Activated CD8-positive, alpha-beta T cell treated with anti-CD3 and anti-CD28 coated beads, Interleukin-2, amount 10 ng/mL, durations not matched to agents 7 days and 5 days (primary cell): ENCODE measurements at regions of chr11 and their contacts with region 1.

Region 1: DNA sequence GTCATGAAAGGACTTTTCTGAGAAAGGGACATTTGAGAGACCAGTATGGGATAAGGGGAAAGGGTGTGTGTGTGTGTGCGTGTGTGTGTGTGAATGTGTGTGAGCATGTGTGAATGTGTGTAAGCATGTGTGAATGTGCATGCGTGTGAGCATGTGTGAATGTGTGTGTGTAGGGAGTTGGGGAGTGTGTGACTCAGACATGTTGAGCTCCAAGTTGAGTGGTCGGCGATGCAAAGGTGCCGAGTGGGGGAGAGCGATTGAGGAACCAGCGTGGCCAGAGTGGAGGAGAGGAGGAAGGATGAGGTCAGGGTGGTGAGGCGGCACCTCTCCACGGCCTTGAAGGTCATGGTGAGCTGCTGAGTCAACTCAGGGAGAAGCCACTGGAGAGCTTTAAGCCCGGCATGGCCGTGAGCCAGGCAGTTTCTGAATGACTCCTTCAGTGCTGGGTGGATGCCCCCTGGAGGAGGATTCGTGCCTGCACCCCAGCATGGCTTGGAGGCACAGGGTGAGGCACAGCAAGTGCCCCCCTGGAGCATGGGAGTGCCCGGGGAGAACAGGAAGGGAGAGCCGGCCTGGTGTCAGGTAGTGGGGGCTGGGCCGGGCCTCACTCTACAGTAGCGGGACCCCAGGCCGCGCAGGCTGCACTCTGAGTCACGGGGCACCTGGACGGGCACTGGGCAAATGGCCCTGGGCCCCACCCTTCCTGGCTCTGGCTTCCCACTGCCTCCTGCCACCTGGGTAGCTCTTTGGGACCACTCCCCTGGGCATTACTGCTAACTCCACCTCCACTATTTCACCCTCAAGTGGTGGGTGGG is 8.2 kb upstream of the CCDC88B start:
- DNase-seq: peak; percentile 89
- ATAC-seq: peak; percentile 95
- H3K4me3 Mint-ChIP-seq: peak overlapping the region; percentile 1
- H3K27ac Mint-ChIP-seq: peak overlapping the region; percentile 86
- H3K4me1 Mint-ChIP-seq: peaks cover 38% of the 10 kb centered on the region
- H3K27me3 Mint-ChIP-seq: peaks cover 2% of the 10 kb centered on the region

Region 2: GRCh38 chr11:64341851-64342791 is 10.4 kb after region 1 on chr11:
- CTCF ChIA-PET with region 1: interaction called, 27 read pairs
- POLR2A ChIA-PET with region 1: interaction called, 22 read pairs
- DNase-seq: peak; percentile 95
- ATAC-seq: peak; percentile 84
- H3K4me3 Mint-ChIP-seq: peak overlapping the region; percentile 80
- H3K27ac Mint-ChIP-seq: no peak overlapping the region
- H3K4me1 Mint-ChIP-seq: peaks cover 55% of the 10 kb centered on the region
- H3K27me3 Mint-ChIP-seq: no peaks in the 10 kb centered on the region

Region 3: GRCh38 chr11:64358907-64359711 is 27.3 kb after region 1 on chr11 and contains the start of gene RPS6KA4:
- CTCF ChIA-PET with region 1: interaction called, 39 read pairs
- POLR2A ChIA-PET with region 1: no interaction called
- DNase-seq: peak; percentile 51
- ATAC-seq: peak; percentile 87
- H3K4me3 Mint-ChIP-seq: peak within 1 kb of the TSS; percentile 82
- H3K27ac Mint-ChIP-seq: peak within 1 kb of the TSS; percentile 79
- H3K4me1 Mint-ChIP-seq: peaks cover 51% of the 10 kb centered on the region
- H3K27me3 Mint-ChIP-seq: no peaks in the 10 kb centered on the region
- total RNA-seq, gene RPS6KA4: 39.0 to 42.3 TPM

Region 4: GRCh38 chr11:64458997-64459396 is 127.2 kb after region 1 on chr11:
- CTCF ChIA-PET with region 1: no interaction called
- POLR2A ChIA-PET with region 1: no interaction called
- DNase-seq: no peak
- ATAC-seq: no peak
- H3K4me3 Mint-ChIP-seq: no peak overlapping the region
- H3K27ac Mint-ChIP-seq: no peak overlapping the region
- H3K4me1 Mint-ChIP-seq: no peaks in the 10 kb centered on the region
- H3K27me3 Mint-ChIP-seq: no peaks in the 10 kb centered on the region

Region 5: GRCh38 chr11:64500176-64501013 is 168.6 kb after region 1 on chr11:
- CTCF ChIA-PET with region 1: no interaction called
- POLR2A ChIA-PET with region 1: no interaction called
- DNase-seq: no peak
- ATAC-seq: no peak
- H3K4me3 Mint-ChIP-seq: no peak overlapping the region
- H3K27ac Mint-ChIP-seq: no peak overlapping the region
- H3K4me1 Mint-ChIP-seq: peaks cover 5% of the 10 kb centered on the region
- H3K27me3 Mint-ChIP-seq: peaks cover 12% of the 10 kb centered on the region